ENCODE measurements at regions of chr7 and their contacts with region 1.

Region 1: GRCh38 chr7:144854839-144855424 is 19.1 kb upstream of the TPK1 start:
- DNase-seq: peak; percentile 22 to 45 (median 40)
- ATAC-seq: peak; percentile 72
- H3K4me3 ChIP-seq: no peak overlapping the region
- H3K27ac ChIP-seq: no peak overlapping the region
- H3K4me1 ChIP-seq: no peaks in the 10 kb centered on the region
- H3K27me3 ChIP-seq: no peaks in the 10 kb centered on the region
- CTCF ChIP-seq: peak; percentile 38 to 65 (median 55); a peak in 5 of 6 replicates
- EP300 ChIP-seq: no peak
- POLR2A ChIP-seq: no peak
- RAD21 ChIP-seq: peak; percentile 78 to 79

Region 2: GRCh38 chr7:144812379-144813283 is 42.3 kb before region 1 on chr7:
- CTCF ChIA-PET with region 1: no interaction called
- POLR2A ChIA-PET with region 1: no interaction called
- in situ Hi-C with region 1: no loop called
- intact Hi-C with region 1: loop called (anchors 1 kb)
- DNase-seq: no peak
- ATAC-seq: no peak
- H3K4me3 ChIP-seq: no peak overlapping the region
- H3K27ac ChIP-seq: no peak overlapping the region
- H3K4me1 ChIP-seq: no peaks in the 10 kb centered on the region
- H3K27me3 ChIP-seq: no peaks in the 10 kb centered on the region
- CTCF ChIP-seq: no peak
- EP300 ChIP-seq: no peak
- POLR2A ChIP-seq: no peak
- RAD21 ChIP-seq: no peak

Region 3: GRCh38 chr7:144936314-144936713 is 81.4 kb after region 1 on chr7:
- CTCF ChIA-PET with region 1: no interaction called
- POLR2A ChIA-PET with region 1: no interaction called
- in situ Hi-C with region 1: no loop called
- intact Hi-C with region 1: no loop called
- DNase-seq: peak in 1 of 4 experiments; percentile 6
- ATAC-seq: no peak
- H3K4me3 ChIP-seq: no peak overlapping the region
- H3K27ac ChIP-seq: no peak overlapping the region
- H3K4me1 ChIP-seq: no peaks in the 10 kb centered on the region
- H3K27me3 ChIP-seq: no peaks in the 10 kb centered on the region
- CTCF ChIP-seq: no peak
- EP300 ChIP-seq: no peak
- POLR2A ChIP-seq: no peak
- RAD21 ChIP-seq: no peak

Region 4: DNA sequence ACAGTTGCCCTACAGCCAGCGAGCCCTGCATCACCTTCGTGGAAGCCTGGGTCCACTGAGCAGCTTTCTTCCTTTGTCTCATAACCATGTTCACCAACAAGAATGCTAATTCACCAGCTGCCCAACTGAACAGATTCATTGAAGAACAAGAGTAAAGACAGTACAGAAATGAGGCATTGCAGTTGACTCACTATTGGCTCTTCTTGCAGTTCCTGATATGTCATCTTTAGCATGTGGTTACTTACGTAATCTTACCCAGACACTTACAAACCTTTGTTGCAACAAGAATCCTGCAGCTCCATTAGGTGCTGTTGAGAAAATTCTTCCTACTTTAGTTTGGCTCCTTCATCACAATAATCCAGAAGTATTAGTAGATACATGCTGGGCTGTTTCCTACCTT is 154.9 kb after region 1 on chr7:
- CTCF ChIA-PET with region 1: no interaction called
- POLR2A ChIA-PET with region 1: no interaction called
- in situ Hi-C with region 1: no loop called
- intact Hi-C with region 1: loop called (anchors 10 kb)
- DNase-seq: no peak
- ATAC-seq: no peak
- H3K4me3 ChIP-seq: no peak overlapping the region
- H3K27ac ChIP-seq: no peak overlapping the region
- H3K4me1 ChIP-seq: no peaks in the 10 kb centered on the region
- H3K27me3 ChIP-seq: no peaks in the 10 kb centered on the region
- CTCF ChIP-seq: no peak
- EP300 ChIP-seq: no peak
- POLR2A ChIP-seq: no peak
- RAD21 ChIP-seq: no peak

Region 5: GRCh38 chr7:145624618-145625017 is 769.7 kb after region 1 on chr7:
- CTCF ChIA-PET with region 1: no interaction called
- POLR2A ChIA-PET with region 1: no interaction called
- in situ Hi-C with region 1: no loop called
- intact Hi-C with region 1: loop called (anchors 10 kb)
- DNase-seq: no peak
- ATAC-seq: no peak
- H3K4me3 ChIP-seq: no peak overlapping the region
- H3K27ac ChIP-seq: no peak overlapping the region
- H3K4me1 ChIP-seq: no peaks in the 10 kb centered on the region
- H3K27me3 ChIP-seq: no peaks in the 10 kb centered on the region
- CTCF ChIP-seq: no peak
- EP300 ChIP-seq: no peak
- POLR2A ChIP-seq: no peak
- RAD21 ChIP-seq: no peak

Measured in K562 (cell line).